Caco-2 (cell line): ENCODE measurements at regions of chr20 and their contacts with region 1.

Region 1: DNA sequence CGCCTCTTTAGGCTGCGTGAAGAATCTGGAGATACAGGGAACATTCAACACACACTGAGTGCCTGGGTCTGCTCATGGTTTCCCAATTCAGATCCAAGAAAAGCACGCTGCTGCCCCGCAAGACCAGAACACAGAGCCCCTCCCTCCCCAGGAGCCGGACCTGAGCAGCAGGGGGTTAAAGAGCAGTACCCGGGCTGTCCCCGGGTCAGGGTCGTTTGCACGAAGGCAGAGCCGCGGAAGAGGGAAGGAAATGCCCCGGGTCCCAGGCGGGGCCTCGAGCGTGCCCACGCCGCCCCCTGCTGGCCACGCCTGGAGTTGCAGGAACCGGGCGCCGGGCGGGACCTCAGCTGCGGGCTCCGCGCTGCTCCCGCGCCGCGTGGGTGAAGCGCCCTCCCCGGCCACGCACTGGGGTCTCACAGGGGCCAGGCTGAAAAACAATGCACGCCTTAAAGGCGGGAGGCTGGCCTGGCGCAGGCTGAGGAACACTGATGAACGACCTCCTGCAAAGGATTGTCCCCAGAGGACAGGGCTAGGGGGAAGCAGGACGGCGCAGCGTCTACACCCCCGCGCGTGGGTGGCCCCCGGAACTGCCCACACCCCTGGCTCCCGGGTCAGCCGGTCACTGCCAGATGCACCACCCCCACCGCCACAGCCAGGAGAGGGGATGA is 48.9 kb downstream of the ANKRD60 start:
- DNase-seq: peak in 1 of 2 experiments; percentile 87
- H3K4me3 ChIP-seq: no peak overlapping the region
- H3K4me3 Mint-ChIP-seq: peak overlapping the region; percentile 55
- H3K27ac Mint-ChIP-seq: no peak overlapping the region
- H3K4me1 ChIP-seq: peaks cover 9% of the 10 kb centered on the region
- H3K4me1 Mint-ChIP-seq: no peaks in the 10 kb centered on the region
- H3K27me3 ChIP-seq: peaks cover 7% of the 10 kb centered on the region
- H3K27me3 Mint-ChIP-seq: peaks cover 11% of the 10 kb centered on the region
- CTCF ChIP-seq: peak; percentile 97 to 100

Region 2: DNA sequence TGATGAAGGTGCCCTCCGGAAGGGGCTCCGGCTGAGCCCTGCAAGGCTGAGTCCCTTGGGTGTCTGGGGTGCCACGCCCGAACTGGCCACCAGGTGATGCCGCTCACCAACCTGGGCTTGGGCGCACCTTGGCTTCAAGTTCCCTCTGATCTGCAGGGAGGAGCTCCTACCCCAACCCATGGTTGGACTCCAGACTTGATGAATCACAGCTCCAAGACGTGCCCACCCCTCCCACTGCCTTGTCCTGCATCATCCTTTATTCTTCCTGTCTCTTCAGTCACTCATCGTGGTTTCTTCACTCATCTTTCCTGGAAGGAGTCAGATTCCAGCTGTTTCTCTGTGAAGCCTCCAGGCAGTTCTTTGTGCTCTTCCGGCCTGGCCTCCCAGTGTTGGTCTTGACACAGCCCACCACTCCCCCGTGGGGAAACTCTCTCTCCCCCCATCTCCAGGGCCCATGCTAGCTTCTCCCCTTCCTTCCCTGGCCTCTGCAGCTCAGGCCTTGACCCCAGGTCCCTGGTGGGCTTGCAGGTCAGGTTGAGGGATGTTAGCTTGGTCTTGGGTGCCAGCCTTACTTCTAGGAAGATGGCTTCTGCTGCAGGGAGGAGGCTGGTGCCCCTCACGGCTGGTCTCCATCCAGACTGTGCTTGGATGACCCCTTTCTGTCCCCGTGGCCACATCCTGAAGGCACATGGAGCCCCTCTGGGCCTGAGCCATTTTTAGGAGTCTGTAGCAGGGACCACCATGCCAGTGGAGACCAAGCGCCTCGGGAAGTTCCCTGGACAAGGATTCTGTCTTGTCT is 556.8 kb before region 1 on chr20:
- CTCF ChIA-PET with region 1: interaction called, 11 read pairs
- POLR2A ChIA-PET with region 1: no interaction called
- intact Hi-C with region 1: loop called (anchors 1 kb)
- DNase-seq: peak; percentile 81 to 87
- H3K4me3 ChIP-seq: no peak overlapping the region
- H3K4me3 Mint-ChIP-seq: no peak overlapping the region
- H3K27ac Mint-ChIP-seq: no peak overlapping the region
- H3K4me1 ChIP-seq: no peaks in the 10 kb centered on the region
- H3K4me1 Mint-ChIP-seq: no peaks in the 10 kb centered on the region
- H3K27me3 ChIP-seq: no peaks in the 10 kb centered on the region; the same call in 1 of the 2 replicates
- H3K27me3 Mint-ChIP-seq: peaks cover 15% of the 10 kb centered on the region
- CTCF ChIP-seq: peak; percentile 99

Region 3: DNA sequence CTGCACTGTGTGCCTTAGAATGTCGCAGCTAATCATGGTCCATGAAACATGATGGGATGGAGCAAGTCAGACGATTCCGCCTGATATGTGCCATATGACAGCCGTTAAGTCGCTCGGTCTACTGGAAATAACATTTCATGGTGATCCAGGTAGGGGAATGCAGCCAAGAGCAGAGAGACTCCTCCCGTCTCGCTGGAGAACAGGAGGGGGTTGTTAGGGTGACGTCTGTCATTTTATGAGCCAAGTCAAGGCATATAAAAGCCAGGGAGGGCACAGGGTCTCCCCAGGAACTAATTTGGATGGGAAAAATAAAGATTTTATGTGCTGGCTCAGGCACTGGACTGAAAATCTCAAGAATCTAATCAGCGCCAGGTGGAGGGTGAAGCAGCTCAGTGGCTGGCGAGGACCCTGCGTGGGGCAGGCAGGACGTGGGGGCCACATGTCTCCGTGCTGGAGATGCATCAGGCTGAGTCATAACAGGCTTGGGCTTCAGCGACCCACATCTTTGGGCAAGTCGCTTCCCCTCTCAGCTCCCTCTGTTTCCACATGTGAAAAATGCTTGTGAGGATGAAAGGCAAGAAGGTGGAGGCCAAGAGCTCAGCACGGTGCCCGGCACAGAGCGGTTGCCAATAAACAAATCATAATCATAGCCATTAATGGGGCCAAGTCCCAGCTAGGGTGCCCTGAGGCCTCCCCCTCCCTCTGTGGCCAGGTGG is 185.7 kb before region 1 on chr20:
- CTCF ChIA-PET with region 1: interaction called, 10 read pairs
- POLR2A ChIA-PET with region 1: no interaction called
- intact Hi-C with region 1: no loop called
- DNase-seq: no peak
- H3K4me3 ChIP-seq: no peak overlapping the region
- H3K4me3 Mint-ChIP-seq: no peak overlapping the region
- H3K27ac Mint-ChIP-seq: no peak overlapping the region
- H3K4me1 ChIP-seq: no peaks in the 10 kb centered on the region
- H3K4me1 Mint-ChIP-seq: no peaks in the 10 kb centered on the region
- H3K27me3 ChIP-seq: peaks cover 1% of the 10 kb centered on the region
- H3K27me3 Mint-ChIP-seq: peaks cover 20% of the 10 kb centered on the region
- CTCF ChIP-seq: no peak

Region 4: GRCh38 chr20:58169450-58169849 is 10.1 kb before region 1 on chr20:
- CTCF ChIA-PET with region 1: interaction called, 10 read pairs
- POLR2A ChIA-PET with region 1: no interaction called
- intact Hi-C with region 1: no loop called
- DNase-seq: no peak
- H3K4me3 ChIP-seq: no peak overlapping the region
- H3K4me3 Mint-ChIP-seq: no peak overlapping the region
- H3K27ac Mint-ChIP-seq: no peak overlapping the region
- H3K4me1 ChIP-seq: no peaks in the 10 kb centered on the region
- H3K4me1 Mint-ChIP-seq: no peaks in the 10 kb centered on the region
- H3K27me3 ChIP-seq: no peaks in the 10 kb centered on the region
- H3K27me3 Mint-ChIP-seq: peaks cover 17% of the 10 kb centered on the region
- CTCF ChIP-seq: no peak